B cell (primary cell): ENCODE measurements at regions of chr10 and their contacts with region 1.

Region 1: DNA sequence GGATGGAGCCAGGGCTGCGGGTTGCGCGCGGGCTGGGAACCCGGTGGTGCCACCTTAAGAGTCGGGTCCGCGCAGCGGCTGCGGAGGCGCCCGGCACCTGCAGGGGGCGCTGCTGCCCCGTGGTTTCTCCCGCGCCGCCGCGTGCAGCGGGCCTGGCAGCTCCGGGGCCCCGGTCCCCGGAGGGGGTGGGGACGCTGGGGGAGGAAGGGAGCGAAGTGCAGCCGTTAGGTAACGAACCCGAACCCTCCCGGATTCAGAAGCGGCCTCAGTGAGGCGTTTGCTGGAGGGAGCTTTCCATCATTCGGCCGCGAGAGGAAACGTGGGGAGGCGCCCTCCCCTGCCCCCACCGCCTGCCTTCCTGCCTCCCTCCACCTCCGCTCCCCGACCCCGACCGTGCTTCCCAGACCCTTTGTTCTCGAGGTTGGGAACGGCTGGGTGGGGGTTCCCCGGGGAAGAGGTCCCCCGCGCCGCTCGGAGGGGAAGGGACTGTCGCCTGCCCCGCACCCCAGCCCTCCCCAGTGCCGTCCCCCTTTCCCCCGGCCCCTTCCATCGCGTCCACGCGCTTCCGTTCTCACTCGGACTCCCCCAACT is 29.6 kb downstream of the SKIDA1 start:
- DNase-seq: peak; percentile 88
- ATAC-seq: peak; percentile 82
- H3K4me3 ChIP-seq: peak overlapping the region; percentile 44 to 74 (median 67)
- H3K4me3 Mint-ChIP-seq: peak overlapping the region; percentile 92
- H3K27ac ChIP-seq: no peak overlapping the region
- H3K27ac Mint-ChIP-seq: no peak overlapping the region
- H3K4me1 ChIP-seq: peaks cover 47 to 51% of the 10 kb centered on the region in 2 donors
- H3K4me1 Mint-ChIP-seq: peaks cover 39% of the 10 kb centered on the region
- H3K27me3 ChIP-seq: peaks cover 2 to 66% (median 55%) of the 10 kb centered on the region in 4 experiments
- H3K27me3 Mint-ChIP-seq: peaks cover 60% of the 10 kb centered on the region
- CTCF ChIP-seq: peak; percentile 96

Region 2: DNA sequence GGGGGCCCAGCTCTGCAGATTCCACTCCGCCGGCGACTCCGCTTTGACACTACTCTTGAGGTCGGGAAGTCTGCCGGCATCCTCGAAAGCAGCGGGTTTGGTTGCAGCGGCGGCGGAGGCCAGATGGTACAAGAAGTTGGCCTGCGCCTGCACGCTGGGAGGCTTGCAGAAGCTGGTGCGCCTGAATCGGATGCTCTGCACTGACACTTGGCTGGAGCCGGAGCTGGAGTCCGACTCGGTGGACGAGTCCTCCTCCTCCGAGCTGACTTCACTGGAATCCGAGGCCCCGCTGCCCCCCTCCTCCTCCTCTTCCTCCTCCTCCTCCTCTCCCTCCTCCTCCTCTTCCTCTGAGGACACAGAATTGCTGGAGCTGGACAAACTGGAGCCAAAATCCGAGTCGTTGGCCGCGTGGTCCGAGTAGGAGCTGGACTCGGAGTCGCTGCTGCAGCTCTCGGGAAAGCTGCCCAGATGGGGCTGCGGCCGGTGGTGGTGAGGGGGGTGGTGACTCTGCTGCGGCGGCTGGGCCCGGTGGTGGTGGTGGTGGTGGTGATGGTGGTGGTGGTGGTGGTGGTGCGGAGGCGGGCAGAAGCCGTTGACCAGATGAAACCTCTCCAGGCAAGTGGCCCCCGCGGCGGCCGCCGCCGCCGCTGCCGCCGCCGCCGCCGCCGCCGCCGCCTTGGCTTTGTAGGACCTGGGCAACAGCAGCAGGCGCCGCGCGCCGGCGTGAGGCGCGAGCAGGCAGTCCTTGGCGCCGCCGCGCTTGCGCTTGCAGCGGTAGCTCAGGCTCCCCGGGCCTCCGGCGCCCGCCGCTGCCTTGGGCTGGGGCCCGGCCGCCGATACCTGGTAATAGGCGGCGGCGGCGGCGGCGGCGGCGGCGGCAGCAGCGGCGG is 20.6 kb after region 1 on chr10:
- CTCF ChIA-PET with region 1: interaction called, 14 read pairs
- POLR2A ChIA-PET with region 1: interaction called, 10 read pairs
- intact Hi-C with region 1: loop called (anchors 2 kb)
- DNase-seq: peak; percentile 74
- ATAC-seq: peak; percentile 64
- H3K4me3 ChIP-seq: peak overlapping the region in 3 of 5 experiments; percentile 39 to 56 (median 53)
- H3K4me3 Mint-ChIP-seq: peak overlapping the region; percentile 85
- H3K27ac ChIP-seq: no peak overlapping the region
- H3K27ac Mint-ChIP-seq: no peak overlapping the region
- H3K4me1 ChIP-seq: peaks cover 37 to 45% of the 10 kb centered on the region in 2 donors
- H3K4me1 Mint-ChIP-seq: peaks cover 36% of the 10 kb centered on the region
- H3K27me3 ChIP-seq: peaks cover 0 to 86% (median 76%) of the 10 kb centered on the region in 4 experiments
- H3K27me3 Mint-ChIP-seq: peaks cover 83% of the 10 kb centered on the region
- CTCF ChIP-seq: no peak

Region 3: DNA sequence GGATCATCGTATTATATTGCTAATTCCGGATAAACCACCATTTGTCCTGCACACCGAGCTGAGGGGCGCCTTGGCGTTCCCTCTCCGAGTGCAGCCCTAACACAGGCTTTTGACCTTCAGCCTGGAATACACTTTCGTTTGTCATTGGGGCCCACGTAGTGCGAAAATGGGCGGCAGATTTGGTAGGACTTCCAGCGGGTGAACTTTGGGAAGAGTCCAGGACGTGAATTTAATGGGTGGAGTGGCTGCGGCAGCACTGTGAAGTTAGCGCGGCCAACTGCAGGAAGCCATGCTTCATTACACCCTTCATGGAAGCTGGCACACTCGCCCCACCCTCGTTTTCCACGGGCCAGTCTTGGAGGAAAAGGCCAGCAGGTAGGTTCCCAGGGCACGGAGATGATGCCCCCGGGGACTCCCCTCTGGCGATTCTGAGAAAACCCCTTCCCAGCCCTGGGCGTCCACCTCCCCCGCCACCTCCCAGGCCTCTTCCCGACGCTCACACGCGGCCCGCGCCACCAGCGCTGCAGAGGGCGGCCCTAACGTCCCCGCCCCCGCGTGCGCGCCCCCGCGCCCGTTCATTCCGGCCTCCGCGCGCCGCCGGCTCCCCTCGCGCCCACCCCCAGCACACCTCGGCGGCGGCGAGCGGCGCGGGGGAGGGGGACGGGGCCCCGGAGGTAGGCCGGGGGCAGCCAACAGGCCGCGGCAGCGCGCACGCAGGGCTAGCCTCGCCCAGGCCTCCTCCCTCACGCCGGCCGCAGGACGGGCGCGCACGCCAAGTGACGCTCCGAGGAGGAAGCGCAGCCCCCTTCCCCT is 37.8 kb after region 1 on chr10 and contains the start of gene MLLT10:
- CTCF ChIA-PET with region 1: interaction called, 6 read pairs
- POLR2A ChIA-PET with region 1: interaction called, 3 read pairs
- intact Hi-C with region 1: loop called (anchors 2 kb)
- DNase-seq: peak; percentile 96
- ATAC-seq: peak; percentile 87
- H3K4me3 ChIP-seq: peak within 1 kb of the TSS; percentile 58 to 98 (median 84)
- H3K4me3 Mint-ChIP-seq: peak within 1 kb of the TSS; percentile 94
- H3K27ac ChIP-seq: peak within 1 kb of the TSS; percentile 69 to 82
- H3K27ac Mint-ChIP-seq: peak within 1 kb of the TSS; percentile 95
- H3K4me1 ChIP-seq: peaks cover 12 to 16% of the 10 kb centered on the region in 2 donors
- H3K4me1 Mint-ChIP-seq: peaks cover 17% of the 10 kb centered on the region
- H3K27me3 ChIP-seq: peaks cover 0 to 10% (median under 1%) of the 10 kb centered on the region in 4 experiments
- H3K27me3 Mint-ChIP-seq: peaks cover 7% of the 10 kb centered on the region
- CTCF ChIP-seq: no peak
- total RNA-seq, gene MLLT10: 66.5 and 70.5 TPM in 2 replicates

Region 4: GRCh38 chr10:21599582-21599981 is 103.7 kb after region 1 on chr10:
- CTCF ChIA-PET with region 1: no interaction called
- POLR2A ChIA-PET with region 1: no interaction called
- intact Hi-C with region 1: no loop called
- DNase-seq: no peak
- ATAC-seq: no peak
- H3K4me3 ChIP-seq: no peak overlapping the region
- H3K4me3 Mint-ChIP-seq: no peak overlapping the region
- H3K27ac ChIP-seq: no peak overlapping the region
- H3K27ac Mint-ChIP-seq: no peak overlapping the region
- H3K4me1 ChIP-seq: peaks cover 0 to 3% of the 10 kb centered on the region in 2 donors
- H3K4me1 Mint-ChIP-seq: peaks cover 7% of the 10 kb centered on the region
- H3K27me3 ChIP-seq: no peaks in the 10 kb centered on the region
- H3K27me3 Mint-ChIP-seq: no peaks in the 10 kb centered on the region
- CTCF ChIP-seq: no peak

Region 5: DNA sequence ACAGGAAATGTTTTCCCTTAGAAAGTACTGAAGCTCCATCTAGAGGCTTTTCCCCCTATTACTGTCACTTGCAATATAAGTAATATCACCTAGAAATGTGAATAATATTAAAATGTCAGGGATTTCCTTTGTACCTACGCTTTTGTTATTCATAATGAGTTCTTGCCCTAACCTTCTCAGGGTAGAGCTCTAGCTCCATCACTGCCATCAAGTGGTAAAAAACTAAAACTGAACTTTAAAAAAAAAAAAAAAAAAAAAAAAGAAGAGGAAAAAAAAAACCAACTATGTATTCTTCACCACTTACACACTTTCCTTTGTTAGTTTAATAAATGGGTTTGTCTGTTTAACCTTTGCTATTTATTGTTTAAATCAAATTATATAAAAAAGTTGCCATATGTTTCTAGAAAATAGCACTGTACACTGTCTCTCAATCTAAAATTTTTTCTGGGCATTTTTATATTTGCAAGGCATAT is 457.8 kb after region 1 on chr10:
- CTCF ChIA-PET with region 1: interaction called, 10 read pairs
- POLR2A ChIA-PET with region 1: no interaction called
- intact Hi-C with region 1: loop called (anchors 1 kb)
- DNase-seq: peak; percentile 23
- ATAC-seq: no peak
- H3K4me3 ChIP-seq: no peak overlapping the region
- H3K4me3 Mint-ChIP-seq: no peak overlapping the region
- H3K27ac ChIP-seq: no peak overlapping the region
- H3K27ac Mint-ChIP-seq: no peak overlapping the region
- H3K4me1 ChIP-seq: peaks cover 2 to 4% of the 10 kb centered on the region in 2 donors
- H3K4me1 Mint-ChIP-seq: peaks cover 4% of the 10 kb centered on the region
- H3K27me3 ChIP-seq: no peaks in the 10 kb centered on the region
- H3K27me3 Mint-ChIP-seq: no peaks in the 10 kb centered on the region
- CTCF ChIP-seq: peak; percentile 57

Region 6: DNA sequence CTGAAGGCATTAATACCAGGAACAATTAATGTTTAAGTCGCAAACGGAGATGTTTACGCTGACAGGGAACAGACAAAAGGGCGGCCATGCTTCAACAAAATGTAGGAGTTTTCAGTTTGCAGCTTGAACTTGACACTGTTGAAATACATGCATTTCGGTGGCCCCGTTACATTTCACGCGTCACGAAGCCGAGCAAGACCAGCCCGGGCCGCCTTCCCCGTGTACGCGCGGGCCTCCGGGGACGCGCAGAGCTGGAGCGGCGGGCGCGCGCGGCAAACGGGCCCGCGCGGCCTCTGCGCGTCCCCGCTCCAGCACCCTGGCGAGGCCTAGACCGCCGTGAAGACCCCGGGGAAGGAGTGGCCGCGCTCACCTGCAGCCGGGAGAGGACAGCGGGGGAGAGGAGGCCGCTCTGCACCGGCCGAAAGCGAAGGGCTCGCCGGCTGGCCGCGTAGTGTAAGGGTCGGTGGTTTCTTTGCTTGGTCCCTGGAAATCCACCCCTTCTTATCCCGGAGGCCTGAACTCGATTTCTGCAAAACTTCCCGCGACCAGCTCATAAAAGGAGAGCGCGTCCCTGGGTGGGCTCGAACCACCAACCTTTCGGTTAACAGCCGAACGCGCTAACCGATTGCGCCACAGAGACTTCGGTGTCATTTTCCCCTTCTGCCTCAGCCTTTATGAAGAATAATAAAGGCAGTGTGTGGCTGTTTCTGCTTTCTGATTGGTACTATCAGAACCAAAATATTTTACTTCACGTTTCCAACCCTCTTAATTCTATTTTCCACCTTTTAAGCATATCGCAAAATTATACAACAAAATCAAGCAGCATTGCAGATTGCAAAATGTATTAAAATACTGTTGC is 733.3 kb after region 1 on chr10:
- CTCF ChIA-PET with region 1: interaction called, 3 read pairs
- POLR2A ChIA-PET with region 1: interaction called, 4 read pairs
- intact Hi-C with region 1: loop called (anchors 10 kb)
- DNase-seq: peak; percentile 96
- ATAC-seq: peak; percentile 81
- H3K4me3 ChIP-seq: peak overlapping the region; percentile 68 to 83 (median 81)
- H3K4me3 Mint-ChIP-seq: peak overlapping the region; percentile 90
- H3K27ac ChIP-seq: peak overlapping the region; percentile 66 to 77
- H3K27ac Mint-ChIP-seq: peak overlapping the region; percentile 100
- H3K4me1 ChIP-seq: no peaks in the 10 kb centered on the region
- H3K4me1 Mint-ChIP-seq: peaks cover 14% of the 10 kb centered on the region
- H3K27me3 ChIP-seq: no peaks in the 10 kb centered on the region
- H3K27me3 Mint-ChIP-seq: peaks cover 7% of the 10 kb centered on the region
- CTCF ChIP-seq: no peak

Region 7: DNA sequence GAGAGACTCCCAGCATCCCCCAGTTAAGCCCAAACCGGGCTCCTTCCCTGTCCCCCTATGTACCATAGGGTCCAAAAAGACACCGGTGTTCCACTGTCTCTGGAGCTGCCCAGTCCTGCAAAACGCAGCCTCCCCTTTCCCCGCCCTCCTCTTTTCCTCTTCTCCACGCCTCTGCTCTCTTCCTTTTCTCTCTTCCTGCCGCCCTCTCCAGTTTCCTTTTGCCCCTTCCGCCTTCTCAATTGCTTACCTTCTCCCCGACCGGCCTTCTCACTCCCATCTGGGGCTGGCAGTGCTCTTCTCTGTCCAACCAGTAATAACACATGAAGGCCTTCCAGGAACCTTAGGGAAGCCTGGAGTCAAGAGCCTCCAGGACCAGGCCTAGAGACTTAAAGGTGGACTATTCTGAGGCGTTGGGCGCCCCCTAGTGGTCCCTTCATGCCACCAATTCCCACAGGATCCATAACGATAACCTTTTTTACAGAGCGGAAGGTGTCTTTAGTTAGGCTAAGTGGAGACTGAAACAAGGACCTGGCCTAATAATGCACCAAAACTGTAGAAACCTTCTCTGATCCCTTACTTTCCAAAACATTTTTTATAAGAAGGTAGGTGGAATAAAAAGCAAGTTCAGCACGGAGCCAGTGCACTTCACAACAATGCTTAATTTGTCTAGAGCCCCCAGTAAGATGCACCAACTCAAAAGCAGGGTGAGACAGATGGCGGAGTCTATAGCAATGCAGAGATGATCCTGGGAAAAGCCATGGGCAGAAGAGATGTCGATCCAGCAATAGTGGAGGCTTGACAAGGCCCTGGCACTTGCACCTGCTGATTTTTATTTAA is 1572.3 kb after region 1 on chr10:
- CTCF ChIA-PET with region 1: no interaction called
- POLR2A ChIA-PET with region 1: no interaction called
- intact Hi-C with region 1: loop called (anchors 2 kb)
- DNase-seq: peak; percentile 70
- ATAC-seq: peak; percentile 33
- H3K4me3 ChIP-seq: no peak overlapping the region
- H3K4me3 Mint-ChIP-seq: no peak overlapping the region
- H3K27ac ChIP-seq: no peak overlapping the region
- H3K27ac Mint-ChIP-seq: no peak overlapping the region
- H3K4me1 ChIP-seq: no peaks in the 10 kb centered on the region
- H3K4me1 Mint-ChIP-seq: no peaks in the 10 kb centered on the region
- H3K27me3 ChIP-seq: peaks cover 0 to 4% (median 0%) of the 10 kb centered on the region in 4 experiments
- H3K27me3 Mint-ChIP-seq: peaks cover 20% of the 10 kb centered on the region
- CTCF ChIP-seq: peak; percentile 87